Posterior vena cava (tissue), 2 donors: ENCODE measurements at regions of chr4 and their contacts with region 1.

Region 1: DNA sequence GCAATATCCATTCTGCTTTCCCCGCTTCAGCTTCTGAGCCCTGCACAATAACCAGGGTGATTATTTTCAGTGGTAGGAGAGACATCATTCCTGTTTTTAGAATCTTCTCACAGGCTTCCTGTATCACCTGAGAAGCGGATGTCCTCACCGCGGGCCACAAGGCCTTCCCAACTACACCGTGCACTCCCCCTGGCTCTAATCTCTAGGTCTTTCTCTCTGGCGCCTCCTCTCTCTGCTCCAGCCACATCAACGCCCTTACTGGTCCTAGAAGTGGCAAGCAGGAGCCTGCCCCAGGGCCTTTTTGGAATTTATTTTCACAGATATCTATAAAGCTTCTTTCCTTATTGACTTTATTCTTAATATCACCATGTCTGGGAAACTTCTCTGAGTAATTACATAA is 675.2 kb upstream of the FRG1 start:
- DNase-seq: no peak

Region 2: GRCh38 chr4:189279191-189279590 is 13.7 kb after region 1 on chr4:
- intact Hi-C with region 1: loop called in 1 of 2 experiments (anchors 1 kb)
- DNase-seq: no peak